Caco-2 (cell line): ENCODE measurements at regions of chr10 and their contacts with region 1.

Region 1: DNA sequence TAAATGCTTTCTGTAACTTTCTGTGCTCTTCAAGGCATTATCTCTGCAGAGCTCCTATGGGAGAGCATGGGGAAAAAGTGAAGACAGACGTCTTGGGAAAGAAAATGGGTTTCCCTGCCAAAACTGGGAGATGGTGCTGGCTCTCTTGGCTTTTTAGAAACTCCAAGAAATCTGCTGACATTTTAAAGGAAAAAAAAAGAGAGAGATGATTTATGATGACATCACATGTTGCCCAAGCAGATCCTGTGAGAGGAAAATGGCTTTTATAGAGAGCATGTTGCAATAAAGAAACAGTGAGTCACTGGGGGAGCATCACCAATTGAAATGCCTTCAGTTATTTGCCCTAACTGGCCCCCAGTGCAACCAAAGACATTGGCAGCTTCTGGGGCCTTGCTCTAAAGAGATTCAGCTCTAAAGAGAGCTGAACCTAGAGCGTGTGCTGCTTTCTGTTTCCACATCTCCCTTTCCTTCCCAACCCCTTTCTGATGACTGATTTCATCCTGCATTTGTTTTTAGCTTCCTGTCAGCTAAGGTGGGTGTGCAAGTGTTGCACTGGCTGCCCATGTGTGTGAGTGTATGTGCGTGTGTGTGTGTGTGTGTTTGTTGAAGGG is 37.7 kb downstream of the LRMDA start:
- DNase-seq: peak; percentile 41 to 50
- H3K4me3 ChIP-seq: no peak overlapping the region
- H3K4me3 Mint-ChIP-seq: no peak overlapping the region
- H3K27ac Mint-ChIP-seq: peak overlapping the region; percentile 23
- H3K4me1 ChIP-seq: peaks cover 5% of the 10 kb centered on the region; the same call in 1 of the 2 replicates
- H3K4me1 Mint-ChIP-seq: peaks cover 19% of the 10 kb centered on the region
- H3K27me3 ChIP-seq: no peaks in the 10 kb centered on the region
- H3K27me3 Mint-ChIP-seq: no peaks in the 10 kb centered on the region
- CTCF ChIP-seq: no peak

Region 2: GRCh38 chr10:75497997-75498883 is 29.1 kb after region 1 on chr10:
- CTCF ChIA-PET with region 1: no interaction called
- POLR2A ChIA-PET with region 1: no interaction called
- intact Hi-C with region 1: loop called (anchors 1 kb)
- DNase-seq: peak; percentile 57 to 58
- H3K4me3 ChIP-seq: no peak overlapping the region
- H3K4me3 Mint-ChIP-seq: peak overlapping the region; percentile 7
- H3K27ac Mint-ChIP-seq: peak overlapping the region; percentile 1
- H3K4me1 ChIP-seq: peaks cover 51% of the 10 kb centered on the region
- H3K4me1 Mint-ChIP-seq: peaks cover 46% of the 10 kb centered on the region
- H3K27me3 ChIP-seq: no peaks in the 10 kb centered on the region
- H3K27me3 Mint-ChIP-seq: no peaks in the 10 kb centered on the region
- CTCF ChIP-seq: no peak